Ovary (tissue), 10 donors: ENCODE measurements at regions of chr22 and their contacts with region 1.

Region 1: DNA sequence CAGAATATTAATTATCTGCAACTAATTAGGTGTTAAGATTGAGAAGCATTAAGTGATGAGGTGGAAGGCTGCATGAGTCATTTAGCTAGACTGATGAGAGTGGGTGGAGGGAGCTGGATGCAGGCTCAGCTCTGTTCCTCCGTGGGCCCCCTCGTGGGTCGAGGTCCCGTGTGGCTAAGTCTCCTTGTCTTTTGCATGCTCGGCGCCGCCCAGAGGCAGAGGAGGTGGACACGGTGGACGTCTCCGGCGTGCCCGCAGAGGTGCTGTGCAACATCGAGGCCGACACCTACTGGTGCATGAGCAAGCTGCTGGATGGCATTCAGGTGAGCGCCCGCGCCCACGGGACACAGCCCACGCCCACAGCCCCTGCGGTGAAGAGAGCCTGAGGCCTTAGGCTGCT is 211.6 kb downstream of the TBC1D22A start:
- DNase-seq: no peak
- H3K4me3 ChIP-seq: no peak overlapping the region
- H3K27ac ChIP-seq: no peak overlapping the region
- H3K4me1 ChIP-seq: peaks cover 8% of the 10 kb centered on the region
- H3K27me3 ChIP-seq: no peaks in the 10 kb centered on the region
- CTCF ChIP-seq: no peak
- EP300 ChIP-seq: no peak
- POLR2A ChIP-seq: no peak

Region 2: DNA sequence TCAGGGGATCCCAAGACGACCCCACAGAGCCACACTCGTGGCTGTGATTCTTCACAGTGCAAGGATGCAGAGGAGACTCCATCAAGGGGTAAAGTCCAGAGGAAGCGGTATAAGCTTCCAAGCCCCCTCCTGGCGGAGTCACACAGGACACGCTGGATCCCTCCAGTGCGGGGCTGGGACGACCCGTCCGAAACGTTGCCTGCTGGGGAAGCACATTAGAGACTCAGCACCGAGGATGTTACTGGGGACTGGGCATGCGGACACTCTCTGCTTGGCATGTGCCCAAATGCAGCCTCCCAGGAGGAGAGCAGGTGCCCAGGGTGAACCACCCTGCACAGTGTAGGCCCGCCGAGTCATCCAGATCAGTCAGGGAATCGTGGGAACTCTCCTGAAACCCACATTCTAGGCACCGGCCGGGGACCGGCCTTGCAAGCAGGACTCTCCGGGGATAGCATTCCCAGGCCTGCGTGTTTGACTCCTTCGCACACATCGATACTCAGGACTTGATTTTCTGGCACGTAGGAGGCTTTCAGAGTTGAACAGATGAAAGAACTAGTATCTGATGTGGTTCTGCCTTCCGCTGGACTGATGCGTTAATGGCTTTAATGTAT is 18.1 kb after region 1 on chr22:
- intact Hi-C with region 1: loop called in 1 of 4 experiments (anchors 1 kb)
- DNase-seq: no peak
- H3K4me3 ChIP-seq: no peak overlapping the region
- H3K27ac ChIP-seq: no peak overlapping the region
- H3K4me1 ChIP-seq: peaks cover 12% of the 10 kb centered on the region
- H3K27me3 ChIP-seq: no peaks in the 10 kb centered on the region
- CTCF ChIP-seq: no peak
- EP300 ChIP-seq: no peak
- POLR2A ChIP-seq: no peak